Caco-2 (cell line): ENCODE measurements at regions of chr1 and their contacts with region 1.

Region 1: DNA sequence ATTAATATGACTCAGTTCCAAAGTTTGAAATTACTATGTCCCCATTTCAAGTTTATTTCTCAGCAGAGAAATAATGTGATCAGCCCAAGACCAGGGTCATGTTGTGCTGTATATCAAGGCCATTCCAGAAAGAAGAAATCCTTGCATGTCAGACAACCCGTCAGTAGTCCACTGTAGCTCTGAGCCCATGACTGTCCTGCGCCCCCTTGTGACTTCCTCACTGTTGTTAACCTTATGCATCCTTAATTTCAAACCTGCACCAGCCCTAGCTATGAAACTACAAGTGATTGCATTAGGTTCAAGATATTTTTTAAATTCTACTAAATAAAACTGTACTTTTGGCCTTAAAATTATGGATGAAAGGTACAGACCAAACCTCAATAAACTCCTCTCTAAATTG is 133.0 kb downstream of the LRRC7 start:
- DNase-seq: peak in 1 of 2 experiments; percentile 45
- H3K4me3 ChIP-seq: no peak overlapping the region
- H3K4me3 Mint-ChIP-seq: no peak overlapping the region
- H3K27ac Mint-ChIP-seq: no peak overlapping the region
- H3K4me1 ChIP-seq: no peaks in the 10 kb centered on the region
- H3K4me1 Mint-ChIP-seq: no peaks in the 10 kb centered on the region
- H3K27me3 ChIP-seq: no peaks in the 10 kb centered on the region
- H3K27me3 Mint-ChIP-seq: no peaks in the 10 kb centered on the region
- CTCF ChIP-seq: peak in 1 of 2 experiments; percentile 47

Region 2: DNA sequence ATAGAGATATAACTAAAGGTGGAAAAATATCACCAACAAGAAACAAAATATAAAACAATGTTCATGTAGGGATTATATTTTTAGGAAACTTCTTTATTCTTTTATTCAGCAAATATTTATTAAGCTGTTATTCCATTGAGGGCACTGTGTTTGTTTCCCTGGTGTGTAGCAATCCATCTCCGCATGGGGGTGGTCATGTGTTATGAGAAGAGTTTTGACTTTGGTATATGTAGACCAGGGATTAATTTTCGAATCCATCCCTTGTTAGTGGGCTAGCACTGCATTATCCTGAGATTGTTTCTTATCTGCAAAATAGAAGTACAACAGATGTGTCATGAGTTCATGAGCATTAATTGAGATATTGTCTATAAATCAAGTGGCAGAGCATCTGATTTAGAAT is 323.3 kb before region 1 on chr1:
- CTCF ChIA-PET with region 1: no interaction called
- POLR2A ChIA-PET with region 1: no interaction called
- intact Hi-C with region 1: loop called (anchors 2 kb)
- DNase-seq: peak in 1 of 2 experiments; percentile 4
- H3K4me3 ChIP-seq: no peak overlapping the region
- H3K4me3 Mint-ChIP-seq: no peak overlapping the region
- H3K27ac Mint-ChIP-seq: no peak overlapping the region
- H3K4me1 ChIP-seq: no peaks in the 10 kb centered on the region
- H3K4me1 Mint-ChIP-seq: peaks cover 15% of the 10 kb centered on the region
- H3K27me3 ChIP-seq: no peaks in the 10 kb centered on the region
- H3K27me3 Mint-ChIP-seq: no peaks in the 10 kb centered on the region
- CTCF ChIP-seq: peak in 1 of 2 experiments; percentile 24